Activated B cell treated with CpG ODN at 0.5 μM for 24 hours (primary cell): ENCODE measurements at regions of chr18 and their contacts with region 1.

Region 1: GRCh38 chr18:49178736-49179135 is 228.0 kb upstream of the SMAD7 start:
- DNase-seq: no peak
- ATAC-seq: no peak
- H3K4me3 Mint-ChIP-seq: no peak overlapping the region
- H3K27ac Mint-ChIP-seq: no peak overlapping the region
- H3K4me1 Mint-ChIP-seq: peaks cover 30% of the 10 kb centered on the region
- H3K27me3 Mint-ChIP-seq: no peaks in the 10 kb centered on the region
- CTCF ChIP-seq: no peak

Region 2: DNA sequence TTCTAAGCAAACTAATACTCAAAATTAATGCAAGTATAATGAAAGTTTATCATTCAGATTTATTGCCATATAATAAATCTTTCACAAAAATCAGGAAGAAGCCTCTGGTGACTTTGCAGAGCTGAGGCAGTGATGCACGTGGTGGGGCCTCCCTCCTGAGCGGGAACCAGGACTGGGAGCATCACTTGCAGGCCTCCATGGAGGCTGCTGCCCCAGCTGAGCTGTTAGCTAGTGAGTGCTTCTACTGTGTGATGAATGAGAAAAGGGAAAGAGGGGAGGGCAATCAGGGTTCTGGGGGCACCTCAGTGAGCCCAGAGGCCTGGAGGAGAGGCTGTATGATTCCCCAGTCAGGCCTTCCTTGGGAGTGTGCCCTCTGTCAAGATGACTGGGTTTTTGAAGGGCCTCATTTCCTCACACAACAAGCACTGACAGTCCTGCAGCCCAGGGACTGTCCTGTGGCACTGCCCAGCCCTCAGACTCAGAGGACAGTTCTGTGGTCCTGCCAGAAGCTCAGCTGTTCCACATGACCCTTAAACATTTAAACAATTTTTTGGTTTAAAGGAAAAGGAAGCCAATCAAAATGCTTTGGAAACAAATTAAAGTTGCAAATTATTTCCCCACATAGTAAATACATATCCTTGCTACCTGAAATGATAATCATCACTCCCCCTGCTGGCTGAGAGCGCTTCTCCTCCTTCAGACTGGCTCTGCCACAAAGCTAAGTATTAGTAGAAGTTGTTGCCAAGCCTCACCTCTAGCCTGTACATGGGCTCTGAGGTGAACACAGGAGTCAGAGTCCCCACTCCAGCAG is 137.1 kb before region 1 on chr18:
- CTCF ChIA-PET with region 1: no interaction called
- POLR2A ChIA-PET with region 1: no interaction called
- intact Hi-C with region 1: loop called (anchors 5 kb)
- DNase-seq: no peak
- ATAC-seq: no peak
- H3K4me3 Mint-ChIP-seq: no peak overlapping the region
- H3K27ac Mint-ChIP-seq: no peak overlapping the region
- H3K4me1 Mint-ChIP-seq: peaks cover 3% of the 10 kb centered on the region
- H3K27me3 Mint-ChIP-seq: no peaks in the 10 kb centered on the region
- CTCF ChIP-seq: no peak

Region 3: DNA sequence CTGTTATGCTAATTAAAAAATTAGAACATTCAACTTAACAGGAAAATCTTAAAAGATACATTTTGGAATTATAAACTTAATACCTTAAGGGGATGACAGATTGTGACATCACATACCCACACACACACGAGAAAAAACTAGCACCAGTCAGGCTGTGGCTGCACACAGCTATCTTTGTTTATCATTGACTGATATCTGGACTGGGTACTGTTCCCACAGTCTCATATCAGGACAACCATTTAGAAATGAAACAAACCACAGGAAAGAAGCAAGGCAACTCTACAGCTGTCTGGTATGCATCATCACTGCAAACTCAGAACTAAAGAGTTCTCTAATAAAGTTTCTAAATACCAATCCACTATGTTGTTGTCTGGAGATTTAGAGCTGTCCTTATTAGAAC is 17.1 kb before region 1 on chr18:
- CTCF ChIA-PET with region 1: interaction called, 5 read pairs
- POLR2A ChIA-PET with region 1: no interaction called
- intact Hi-C with region 1: loop called (anchors 2 kb)
- DNase-seq: no peak
- ATAC-seq: no peak
- H3K4me3 Mint-ChIP-seq: no peak overlapping the region
- H3K27ac Mint-ChIP-seq: no peak overlapping the region
- H3K4me1 Mint-ChIP-seq: peaks cover 7% of the 10 kb centered on the region
- H3K27me3 Mint-ChIP-seq: no peaks in the 10 kb centered on the region
- CTCF ChIP-seq: no peak